Left colon (tissue), 2 donors: ENCODE measurements at regions of chr22 and their contacts with region 1.

Region 1: DNA sequence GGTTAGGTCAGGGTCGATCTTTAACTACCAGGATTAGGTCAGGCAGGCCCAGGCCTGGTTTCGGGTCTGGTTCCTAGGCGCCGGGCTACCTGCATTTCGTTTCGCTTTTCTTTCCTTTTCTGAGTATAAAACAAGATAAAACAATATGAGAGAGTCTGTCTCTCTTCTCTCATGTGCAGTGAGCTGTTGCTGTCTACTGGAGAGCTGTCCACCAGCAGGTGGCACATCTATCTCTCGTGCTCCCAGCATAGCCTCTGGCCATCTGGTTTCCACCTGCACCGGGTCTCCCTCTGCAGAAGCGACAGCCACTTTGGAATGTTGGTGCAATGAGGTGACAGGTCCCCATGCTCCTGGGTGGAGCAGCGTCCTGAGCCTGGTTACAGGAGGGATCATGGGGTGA is 27.6 kb downstream of the RIBC2 start:
- DNase-seq: peak in 1 of 2 donors; percentile 58
- ATAC-seq: peak; percentile 83

Region 2: GRCh38 chr22:45515676-45516453 is 74.7 kb after region 1 on chr22:
- intact Hi-C with region 1: loop called in 1 of 2 experiments (anchors 2 kb)
- DNase-seq: no peak
- ATAC-seq: no peak

Region 3: DNA sequence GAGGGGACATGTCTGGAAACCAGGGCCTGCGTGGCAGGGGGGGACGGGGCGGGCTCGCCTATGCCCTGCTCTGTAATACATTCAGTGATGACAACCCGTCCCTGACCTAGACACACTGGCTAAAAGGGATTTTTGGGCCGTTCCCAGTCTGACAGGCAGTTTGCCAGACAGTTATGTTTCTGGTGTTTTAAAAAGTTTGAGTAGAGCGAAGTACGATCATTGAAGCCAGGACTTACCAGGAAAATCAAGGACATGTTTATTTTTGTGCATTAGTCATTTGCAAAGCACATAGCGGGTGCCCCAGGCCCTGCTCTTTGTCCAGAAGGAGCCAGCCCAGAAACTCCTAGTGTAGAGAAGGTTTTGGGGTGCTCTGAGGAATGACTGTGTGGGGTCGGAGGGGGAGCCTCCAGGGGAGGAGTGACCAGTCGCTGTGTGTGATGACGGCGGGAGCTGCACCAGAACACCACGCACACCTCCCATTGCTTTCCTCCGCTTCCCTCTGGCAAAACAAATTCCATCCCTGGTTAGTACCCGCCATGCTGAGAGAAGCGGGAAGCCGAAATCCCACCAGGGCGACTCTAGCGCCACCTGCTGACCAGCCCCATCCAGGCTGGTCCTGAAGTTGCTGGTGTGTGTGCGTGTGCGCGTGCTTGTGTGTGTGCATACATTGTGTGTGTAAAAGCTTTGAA is 112.4 kb after region 1 on chr22:
- intact Hi-C with region 1: loop called (anchors 5 to 10 kb)
- DNase-seq: peak; percentile 53 to 77
- ATAC-seq: peak; percentile 79